HEK293 (cell line): ENCODE measurements at regions of chr1 and their contacts with region 1.

Region 1: DNA sequence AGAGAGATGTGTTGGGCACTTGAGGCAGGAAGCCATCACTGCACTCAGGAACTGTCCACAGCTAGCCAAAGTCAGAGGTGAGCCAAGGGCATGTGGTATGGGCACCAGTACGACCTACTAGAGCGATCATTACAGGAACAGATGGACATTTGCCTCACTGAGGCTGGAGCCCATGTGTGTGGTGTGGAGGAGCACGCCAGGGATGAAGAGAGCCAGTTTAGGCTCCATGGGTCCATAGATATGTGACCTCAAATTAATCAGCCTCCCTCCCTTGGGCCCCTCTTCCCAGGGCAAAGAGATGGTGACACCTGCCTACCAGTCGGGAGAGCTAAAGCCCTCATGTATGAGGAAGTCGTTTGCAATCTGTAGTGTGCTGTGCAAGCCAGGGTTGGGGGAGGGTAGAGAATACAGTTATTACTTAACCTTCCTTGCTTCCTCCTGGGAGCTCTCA is 4.1 kb downstream of the PGLYRP4 start:
- H3K4me3 ChIP-seq: no peak overlapping the region
- H3K27ac ChIP-seq: no peak overlapping the region
- H3K4me1 ChIP-seq: no peaks in the 10 kb centered on the region
- CTCF ChIP-seq: no peak

Region 2: DNA sequence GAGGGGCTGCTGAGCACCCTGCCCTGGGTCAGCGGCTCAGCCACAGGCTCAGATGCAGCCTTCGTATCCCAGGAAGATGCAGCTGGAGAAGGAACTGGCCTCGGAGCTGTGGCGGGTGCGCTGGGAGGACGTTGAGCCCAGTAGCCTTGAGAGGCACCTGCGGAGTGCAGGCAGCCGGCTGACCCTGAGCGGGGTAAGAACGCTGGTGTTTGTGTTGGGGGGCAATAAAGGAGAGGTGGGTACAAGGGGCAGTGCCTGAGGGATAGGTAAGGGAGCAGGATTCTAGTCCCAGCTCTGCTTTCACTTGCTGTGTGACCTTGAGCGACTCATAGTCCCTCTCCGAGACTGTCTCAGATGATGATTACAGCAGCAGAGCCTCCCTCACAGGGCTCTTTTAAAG is 340.3 kb after region 1 on chr1:
- CTCF ChIA-PET with region 1: no interaction called
- POLR2A ChIA-PET with region 1: interaction called, 14 read pairs
- H3K4me3 ChIP-seq: no peak overlapping the region
- H3K27ac ChIP-seq: no peak overlapping the region
- H3K4me1 ChIP-seq: no peaks in the 10 kb centered on the region
- CTCF ChIP-seq: no peak